Lower leg skin (tissue), 4 donors: ENCODE measurements at regions of chr16 and their contacts with region 1.

Region 1: GRCh38 chr16:64738321-64738960 is 383.4 kb downstream of the CDH11 start:
- DNase-seq: no peak
- H3K4me3 ChIP-seq: no peak overlapping the region
- CTCF ChIP-seq: no peak
- POLR2A ChIP-seq: no peak

Region 2: DNA sequence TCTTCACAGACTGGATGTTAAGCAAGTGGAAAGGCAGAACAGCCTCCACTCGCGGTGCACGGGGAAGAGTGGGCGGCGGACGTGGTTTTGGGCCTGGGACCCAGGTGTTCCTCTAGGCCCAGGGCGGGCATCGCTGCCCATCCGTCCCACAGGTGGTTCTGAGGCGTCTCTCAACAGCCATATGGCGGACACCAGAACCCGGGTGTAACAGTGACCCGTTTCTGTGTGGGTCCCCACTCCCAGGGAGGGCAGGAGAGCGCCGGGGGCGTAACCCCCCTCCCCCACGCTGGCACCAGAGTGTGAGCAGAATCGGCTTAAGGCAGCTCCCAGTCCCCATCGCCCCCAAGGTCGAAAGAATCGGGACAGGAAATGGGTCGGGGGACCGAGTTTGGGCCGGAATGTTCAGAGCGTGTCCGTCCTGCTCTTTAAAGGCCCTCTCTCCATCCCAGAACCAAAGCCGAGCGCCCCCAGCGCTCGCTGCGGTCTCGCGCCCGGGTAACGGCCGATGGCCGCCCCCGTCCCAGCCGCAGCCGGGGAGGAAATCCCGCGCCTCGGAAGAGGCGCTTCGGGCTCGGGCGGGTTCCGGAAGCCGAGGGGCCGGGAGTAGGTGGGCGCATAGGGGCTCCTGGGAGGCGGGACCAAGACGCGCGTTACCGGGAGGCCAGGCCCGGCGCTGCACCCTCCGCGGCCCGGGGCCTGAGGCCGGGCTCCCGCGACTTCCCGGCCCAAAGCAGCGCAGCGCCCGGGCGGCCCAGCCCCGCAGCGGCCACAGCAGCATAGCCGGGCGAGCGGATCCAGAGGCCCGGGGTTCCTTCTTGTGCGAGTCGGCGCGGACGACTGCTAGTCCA is 1811.1 kb after region 1 on chr16 and contains the start of gene TK2:
- intact Hi-C with region 1: loop called (anchors 10 kb)
- DNase-seq: peak in 1 of 2 donors; percentile 91
- H3K4me3 ChIP-seq: peak within 1 kb of the TSS; percentile 62
- CTCF ChIP-seq: no peak
- POLR2A ChIP-seq: no peak
- total RNA-seq, gene TK2: 15.3 to 28.3 (median 22.6) TPM